ENCODE measurements at regions of chr10 and their contacts with region 1.

Region 1: GRCh38 chr10:114504769-114505579 is 100.7 kb upstream of the AFAP1L2 start:
- DNase-seq: peak; percentile 45 to 95
- H3K4me3 ChIP-seq: no peak overlapping the region
- H3K27ac ChIP-seq: peak overlapping the region; percentile 82
- H3K4me1 ChIP-seq: peaks cover 59% of the 10 kb centered on the region
- H3K27me3 ChIP-seq: no peaks in the 10 kb centered on the region
- CTCF ChIP-seq: no peak

Region 2: DNA sequence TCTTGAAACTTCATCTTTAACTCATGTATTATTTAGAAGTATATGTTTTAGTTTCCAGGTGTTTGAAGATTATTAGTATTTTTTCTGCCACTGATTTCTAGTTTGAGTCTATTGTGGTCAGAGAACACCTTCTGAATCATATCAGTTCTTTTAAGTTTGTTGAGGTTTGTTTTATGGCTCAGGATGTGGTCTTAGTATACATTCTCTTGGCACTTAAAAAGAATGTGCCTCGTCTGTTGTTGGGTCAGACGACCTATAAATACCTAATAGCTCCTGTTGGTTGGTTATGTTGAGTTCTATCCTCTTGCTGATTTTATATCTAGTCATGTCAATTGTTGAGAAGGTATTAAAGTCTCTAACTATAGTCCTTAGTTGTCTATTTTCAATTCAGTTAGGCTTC is 309.9 kb before region 1 on chr10:
- CTCF ChIA-PET with region 1: no interaction called
- POLR2A ChIA-PET with region 1: no interaction called
- intact Hi-C with region 1: no loop called
- DNase-seq: no peak
- H3K4me3 ChIP-seq: no peak overlapping the region
- H3K27ac ChIP-seq: no peak overlapping the region
- H3K4me1 ChIP-seq: no peaks in the 10 kb centered on the region
- H3K27me3 ChIP-seq: no peaks in the 10 kb centered on the region
- CTCF ChIP-seq: no peak

Region 3: DNA sequence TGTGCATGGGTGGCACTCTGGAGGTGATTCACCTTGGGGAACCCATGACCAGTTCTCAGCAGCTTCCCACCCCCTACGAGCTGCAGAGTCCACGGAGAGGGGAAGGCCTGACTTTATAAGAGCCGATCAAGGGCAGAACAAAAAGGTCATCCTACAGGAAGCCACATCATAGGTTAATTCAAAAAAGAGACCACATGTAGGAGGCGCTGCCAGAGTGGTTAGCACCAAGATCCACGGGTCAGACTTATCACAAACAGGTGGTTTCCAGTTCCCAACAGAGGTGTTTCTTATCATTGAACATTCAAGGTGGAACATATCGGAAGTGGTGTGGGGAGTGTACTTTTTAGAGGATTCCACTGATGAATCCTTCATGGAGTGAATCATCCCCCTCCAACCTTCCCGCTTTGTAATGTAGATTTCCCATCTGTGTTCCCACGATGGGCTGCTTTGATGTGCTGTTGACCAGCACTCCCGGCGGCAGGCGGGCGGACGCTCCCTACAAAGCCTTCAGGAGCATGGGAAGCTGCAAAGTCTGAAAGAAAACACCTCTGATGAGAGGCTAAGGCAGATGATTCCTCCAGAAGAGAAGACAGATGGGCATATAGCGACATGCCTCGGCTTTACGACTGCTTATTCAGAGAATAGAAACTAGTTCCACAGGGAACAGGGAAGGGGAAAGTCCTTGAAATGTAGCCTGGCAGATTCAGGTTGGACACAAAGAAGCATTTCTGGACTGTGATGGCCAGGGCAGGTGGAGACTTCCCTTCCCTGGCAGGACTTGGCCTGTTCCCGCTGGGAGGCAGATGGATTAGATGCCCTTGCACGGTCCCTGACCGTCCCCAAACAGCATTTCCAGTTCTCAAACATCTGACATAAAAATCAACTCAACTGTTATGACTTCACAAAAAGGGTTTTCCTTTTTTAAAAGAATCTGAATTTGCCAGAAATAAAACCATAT is 167.2 kb before region 1 on chr10:
- CTCF ChIA-PET with region 1: no interaction called
- POLR2A ChIA-PET with region 1: no interaction called
- intact Hi-C with region 1: no loop called
- DNase-seq: no peak
- H3K4me3 ChIP-seq: no peak overlapping the region
- H3K27ac ChIP-seq: no peak overlapping the region
- H3K4me1 ChIP-seq: no peaks in the 10 kb centered on the region
- H3K27me3 ChIP-seq: no peaks in the 10 kb centered on the region
- CTCF ChIP-seq: no peak

Region 4: DNA sequence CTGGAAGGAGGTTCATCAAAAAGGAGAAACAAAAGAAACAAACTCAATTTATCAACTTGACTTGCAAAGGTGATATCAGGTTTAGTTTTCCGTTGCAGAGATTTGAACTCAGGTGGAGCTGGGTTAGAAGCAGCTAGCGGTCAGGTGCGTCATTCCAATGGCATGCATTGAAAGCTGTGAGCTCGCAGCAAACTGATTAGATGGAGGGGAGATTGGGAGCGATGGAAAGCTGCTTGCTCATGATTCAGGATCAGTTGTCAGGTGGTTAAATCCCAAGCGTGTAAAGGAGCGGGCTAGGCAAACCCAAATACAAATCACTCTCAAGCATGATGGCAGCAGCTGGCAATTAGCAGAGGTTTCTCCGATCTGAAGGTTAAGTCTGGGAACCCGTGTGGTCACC is 51.4 kb before region 1 on chr10:
- CTCF ChIA-PET with region 1: no interaction called
- POLR2A ChIA-PET with region 1: interaction called, 10 read pairs
- intact Hi-C with region 1: no loop called
- DNase-seq: peak in 1 of 2 experiments; percentile 35
- H3K4me3 ChIP-seq: no peak overlapping the region
- H3K27ac ChIP-seq: no peak overlapping the region
- H3K4me1 ChIP-seq: no peaks in the 10 kb centered on the region
- H3K27me3 ChIP-seq: no peaks in the 10 kb centered on the region
- CTCF ChIP-seq: no peak

Region 5: GRCh38 chr10:114520453-114520852 is 15.5 kb after region 1 on chr10:
- CTCF ChIA-PET with region 1: no interaction called
- POLR2A ChIA-PET with region 1: no interaction called
- intact Hi-C with region 1: loop called (anchors 2 kb)
- DNase-seq: peak in 1 of 2 experiments; percentile 92
- H3K4me3 ChIP-seq: no peak overlapping the region
- H3K27ac ChIP-seq: peak overlapping the region; percentile 93
- H3K4me1 ChIP-seq: peaks cover 58% of the 10 kb centered on the region
- H3K27me3 ChIP-seq: no peaks in the 10 kb centered on the region
- CTCF ChIP-seq: no peak

Region 6: DNA sequence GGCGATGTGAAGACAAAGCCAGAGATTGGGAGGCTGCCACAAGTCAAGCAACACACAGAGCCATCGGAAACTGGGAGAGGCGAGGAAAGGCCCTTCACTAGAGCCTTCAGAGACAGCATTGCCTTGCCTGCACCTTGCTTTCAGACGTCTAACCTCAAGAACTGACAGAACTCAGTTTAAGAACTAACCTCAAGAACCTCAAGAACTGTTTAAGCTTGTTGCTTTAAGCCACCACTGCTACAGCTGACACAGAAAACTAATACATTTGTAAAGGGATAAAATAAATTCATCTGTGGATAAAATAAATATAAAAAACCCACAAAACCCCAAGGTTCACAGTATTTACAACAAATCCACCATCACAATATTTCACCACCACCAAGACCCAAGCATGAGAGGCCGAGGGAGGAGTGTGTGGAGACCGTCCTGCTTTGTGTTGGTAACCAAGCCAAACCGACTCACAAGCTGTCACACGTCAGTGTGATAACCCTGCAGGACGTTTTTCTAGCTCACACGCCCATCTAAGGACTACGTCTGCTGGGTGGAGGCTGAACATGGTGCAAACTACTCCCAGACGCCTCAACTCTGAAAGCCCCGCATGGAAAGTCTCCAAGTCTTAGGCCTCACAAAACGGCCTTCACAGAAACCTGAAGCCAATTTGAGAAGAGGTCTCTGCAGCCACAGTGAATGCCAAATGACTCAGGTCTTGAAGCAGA is 36.3 kb after region 1 on chr10:
- CTCF ChIA-PET with region 1: interaction called, 3 read pairs
- POLR2A ChIA-PET with region 1: interaction called, 3 read pairs
- intact Hi-C with region 1: loop called (anchors 2 kb)
- DNase-seq: peak; percentile 39 to 51
- H3K4me3 ChIP-seq: no peak overlapping the region
- H3K27ac ChIP-seq: no peak overlapping the region
- H3K4me1 ChIP-seq: peaks cover 16% of the 10 kb centered on the region
- H3K27me3 ChIP-seq: no peaks in the 10 kb centered on the region
- CTCF ChIP-seq: no peak